Activated B cell treated with CpG ODN at 0.5 μM for 24 hours (primary cell): ENCODE measurements at regions of chr1 and their contacts with region 1.

Region 1: DNA sequence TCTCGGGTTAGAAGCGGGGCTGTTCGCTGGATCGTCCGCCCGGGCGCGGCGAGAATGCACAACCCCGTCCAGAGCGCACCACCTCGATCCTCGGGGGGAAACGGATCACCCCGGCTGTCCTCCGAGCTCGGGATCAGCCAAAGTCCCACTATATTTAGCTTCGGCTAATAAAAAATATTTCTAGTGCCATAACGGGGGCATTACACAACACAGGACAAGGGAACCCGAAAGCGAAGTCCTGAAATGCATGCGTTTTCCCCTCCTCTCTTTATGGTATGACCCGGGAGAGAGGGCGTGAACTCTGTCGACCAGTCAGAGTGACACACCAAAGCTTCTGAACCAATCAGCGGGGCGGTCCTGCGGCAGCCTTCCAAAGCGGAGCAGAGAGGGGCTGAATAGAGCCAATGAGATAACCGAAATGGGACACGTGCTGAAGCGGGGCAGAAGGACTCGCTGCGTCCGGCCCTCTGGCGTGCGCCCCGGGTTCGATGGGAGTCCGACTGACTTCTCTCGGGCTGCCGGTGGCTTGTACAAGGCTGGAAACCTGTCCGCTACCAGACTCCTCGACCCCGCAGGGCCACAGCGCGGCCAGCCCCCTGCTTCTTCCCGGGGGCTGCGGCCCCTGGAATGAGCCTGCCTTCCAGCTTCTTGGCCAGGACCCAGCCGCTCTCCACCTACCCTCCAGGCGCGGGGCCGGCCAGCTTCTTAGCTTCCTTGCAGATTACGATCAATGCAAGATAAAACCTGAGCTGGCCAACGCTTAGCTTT is at the start of gene ALDH4A1:
- DNase-seq: peak; percentile 76
- ATAC-seq: peak; percentile 96
- H3K4me3 Mint-ChIP-seq: peak within 1 kb of the TSS; percentile 95
- H3K27ac Mint-ChIP-seq: peak within 1 kb of the TSS; percentile 99
- H3K4me1 Mint-ChIP-seq: peaks cover 26% of the 10 kb centered on the region
- H3K27me3 Mint-ChIP-seq: no peaks in the 10 kb centered on the region
- CTCF ChIP-seq: no peak
- total RNA-seq, gene ALDH4A1: 6.5 and 7.1 TPM in 2 replicates

Region 2: GRCh38 chr1:18883636-18884418 is 18.9 kb before region 1 on chr1:
- CTCF ChIA-PET with region 1: interaction called, 26 read pairs
- POLR2A ChIA-PET with region 1: no interaction called
- intact Hi-C with region 1: loop called (anchors 1 kb)
- DNase-seq: peak; percentile 63
- ATAC-seq: peak; percentile 95
- H3K4me3 Mint-ChIP-seq: no peak overlapping the region
- H3K27ac Mint-ChIP-seq: no peak overlapping the region
- H3K4me1 Mint-ChIP-seq: no peaks in the 10 kb centered on the region
- H3K27me3 Mint-ChIP-seq: no peaks in the 10 kb centered on the region
- CTCF ChIP-seq: peak; percentile 70

Region 3: GRCh38 chr1:18926315-18927081 is 23.8 kb after region 1 on chr1:
- CTCF ChIA-PET with region 1: interaction called, 26 read pairs
- POLR2A ChIA-PET with region 1: interaction called, 13 read pairs
- intact Hi-C with region 1: loop called (anchors 1 kb)
- DNase-seq: peak; percentile 58
- ATAC-seq: peak; percentile 86
- H3K4me3 Mint-ChIP-seq: peak overlapping the region; percentile 79
- H3K27ac Mint-ChIP-seq: peak overlapping the region; percentile 95
- H3K4me1 Mint-ChIP-seq: peaks cover 74% of the 10 kb centered on the region
- H3K27me3 Mint-ChIP-seq: no peaks in the 10 kb centered on the region
- CTCF ChIP-seq: no peak

Region 4: DNA sequence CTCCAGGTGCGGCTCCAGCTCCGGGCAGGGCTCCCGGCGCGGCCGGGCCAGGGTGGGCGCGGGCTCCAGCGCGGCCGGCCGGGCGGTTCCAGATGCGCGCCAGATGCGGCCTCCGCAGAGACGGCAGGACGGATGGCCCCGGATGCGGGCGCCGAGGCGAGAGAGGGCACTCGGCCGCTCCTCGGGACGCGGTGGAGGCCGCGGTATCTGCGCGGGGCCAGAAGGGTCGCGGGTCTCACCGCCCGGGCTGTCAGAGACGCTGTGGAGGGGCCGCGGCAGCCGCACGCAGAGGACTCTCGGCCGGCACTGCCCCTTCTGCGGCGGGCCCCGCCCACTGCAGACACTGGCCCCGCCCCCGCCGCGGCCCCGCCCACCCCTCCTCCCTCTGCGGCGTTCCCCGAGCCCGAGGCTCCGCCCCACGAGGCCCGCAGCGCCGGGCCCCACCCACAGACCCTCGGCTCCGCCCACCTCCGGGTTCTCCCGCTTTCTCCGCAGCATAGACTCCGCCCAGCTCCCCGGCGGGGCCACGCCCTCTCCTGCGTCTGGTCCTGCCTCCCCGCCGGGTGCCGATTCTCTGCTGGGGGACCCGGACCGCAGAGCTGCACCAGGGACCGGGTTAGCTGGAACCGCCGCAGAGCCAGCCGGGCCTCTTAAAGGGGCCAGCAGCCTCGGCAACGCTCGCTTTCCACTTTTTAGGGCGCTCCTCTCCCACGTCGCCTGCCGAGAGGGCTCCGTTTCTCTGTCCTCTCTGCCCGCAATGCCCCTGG is 53.8 kb after region 1 on chr1 and contains the start of gene IFFO2:
- CTCF ChIA-PET with region 1: interaction called, 190 read pairs
- POLR2A ChIA-PET with region 1: interaction called, 16 read pairs
- intact Hi-C with region 1: loop called (anchors 1 kb)
- DNase-seq: peak; percentile 99
- ATAC-seq: peak; percentile 85
- H3K4me3 Mint-ChIP-seq: peak within 1 kb of the TSS; percentile 88
- H3K27ac Mint-ChIP-seq: peak within 1 kb of the TSS; percentile 12
- H3K4me1 Mint-ChIP-seq: peaks cover 49% of the 10 kb centered on the region
- H3K27me3 Mint-ChIP-seq: peaks cover 11% of the 10 kb centered on the region
- CTCF ChIP-seq: no peak
- total RNA-seq, gene IFFO2: 13.0 and 13.6 TPM in 2 replicates

Region 5: GRCh38 chr1:19087737-19088594 is 185.3 kb after region 1 on chr1:
- CTCF ChIA-PET with region 1: interaction called, 6 read pairs
- POLR2A ChIA-PET with region 1: interaction called, 3 read pairs
- intact Hi-C with region 1: loop called (anchors 5 kb)
- DNase-seq: no peak
- ATAC-seq: peak; percentile 71
- H3K4me3 Mint-ChIP-seq: no peak overlapping the region
- H3K27ac Mint-ChIP-seq: peak overlapping the region; percentile 77
- H3K4me1 Mint-ChIP-seq: peaks cover 10% of the 10 kb centered on the region
- H3K27me3 Mint-ChIP-seq: no peaks in the 10 kb centered on the region
- CTCF ChIP-seq: no peak

Region 6: GRCh38 chr1:19209990-19210771 is 307.5 kb after region 1 on chr1 and contains the start of gene UBR4:
- CTCF ChIA-PET with region 1: no interaction called
- POLR2A ChIA-PET with region 1: no interaction called
- intact Hi-C with region 1: loop called (anchors 1 kb)
- DNase-seq: peak; percentile 98
- ATAC-seq: peak; percentile 77
- H3K4me3 Mint-ChIP-seq: peak within 1 kb of the TSS; percentile 95
- H3K27ac Mint-ChIP-seq: peak within 1 kb of the TSS; percentile 97
- H3K4me1 Mint-ChIP-seq: peaks cover 57% of the 10 kb centered on the region
- H3K27me3 Mint-ChIP-seq: no peaks in the 10 kb centered on the region
- CTCF ChIP-seq: no peak
- total RNA-seq, gene UBR4: 221 and 262 TPM in 2 replicates

Region 7: GRCh38 chr1:19311959-19312781 is 409.5 kb after region 1 on chr1 and contains the starts of genes AKR7A2 and SLC66A1:
- CTCF ChIA-PET with region 1: no interaction called
- POLR2A ChIA-PET with region 1: no interaction called
- intact Hi-C with region 1: loop called (anchors 10 kb)
- DNase-seq: peak; percentile 96
- ATAC-seq: peak; percentile 91
- H3K4me3 Mint-ChIP-seq: peak within 1 kb of the TSS; percentile 90
- H3K27ac Mint-ChIP-seq: peak within 1 kb of the TSS; percentile 61
- H3K4me1 Mint-ChIP-seq: peaks cover 58% of the 10 kb centered on the region
- H3K27me3 Mint-ChIP-seq: no peaks in the 10 kb centered on the region
- CTCF ChIP-seq: no peak
- total RNA-seq, gene AKR7A2: 29.9 and 30.3 TPM in 2 replicates
- total RNA-seq, gene SLC66A1: 9.1 and 11.9 TPM in 2 replicates